ENCODE measurements at regions of chr3 and their contacts with region 1.

Region 1: GRCh38 chr3:55897573-55898224 is 410.6 kb upstream of the WNT5A start:
- DNase-seq: peak; percentile 21
- ATAC-seq: peak; percentile 52; the same call in 1 of the 2 replicates
- H3K4me3 ChIP-seq: no peak overlapping the region
- H3K27ac ChIP-seq: no peak overlapping the region
- H3K4me1 ChIP-seq: peaks cover 6% of the 10 kb centered on the region
- H3K27me3 ChIP-seq: peaks cover 11% of the 10 kb centered on the region
- CTCF ChIP-seq: peak; percentile 58
- POLR2A ChIP-seq: no peak
- RAD21 ChIP-seq: peak; percentile 74

Region 2: GRCh38 chr3:54427941-54428871 is 1469.5 kb before region 1 on chr3:
- CTCF ChIA-PET with region 1: interaction called, 3 read pairs
- POLR2A ChIA-PET with region 1: no interaction called
- dilution Hi-C with region 1: no loop called
- in situ Hi-C with region 1: no loop called
- intact Hi-C with region 1: loop called (anchors 5 kb)
- DNase-seq: peak; percentile 76
- ATAC-seq: peak; percentile 90
- H3K4me3 ChIP-seq: no peak overlapping the region
- H3K27ac ChIP-seq: no peak overlapping the region
- H3K4me1 ChIP-seq: no peaks in the 10 kb centered on the region
- H3K27me3 ChIP-seq: no peaks in the 10 kb centered on the region
- CTCF ChIP-seq: peak; percentile 88
- POLR2A ChIP-seq: no peak
- RAD21 ChIP-seq: peak; percentile 83

Region 3: GRCh38 chr3:54859184-54859583 is 1038.5 kb before region 1 on chr3:
- CTCF ChIA-PET with region 1: interaction called, 3 read pairs
- POLR2A ChIA-PET with region 1: no interaction called
- dilution Hi-C with region 1: no loop called
- in situ Hi-C with region 1: no loop called
- intact Hi-C with region 1: loop called (anchors 5 kb)
- DNase-seq: peak; percentile 68
- ATAC-seq: peak; percentile 50; the same call in 1 of the 2 replicates
- H3K4me3 ChIP-seq: no peak overlapping the region
- H3K27ac ChIP-seq: no peak overlapping the region
- H3K4me1 ChIP-seq: peaks cover 6% of the 10 kb centered on the region
- H3K27me3 ChIP-seq: no peaks in the 10 kb centered on the region; the same call in 1 of the 2 replicates
- CTCF ChIP-seq: no peak
- POLR2A ChIP-seq: no peak
- RAD21 ChIP-seq: no peak

Region 4: GRCh38 chr3:54951405-54951804 is 946.3 kb before region 1 on chr3:
- CTCF ChIA-PET with region 1: no interaction called
- POLR2A ChIA-PET with region 1: no interaction called
- dilution Hi-C with region 1: no loop called
- in situ Hi-C with region 1: no loop called
- intact Hi-C with region 1: loop called (anchors 5 kb)
- DNase-seq: peak; percentile 93
- ATAC-seq: peak; percentile 89
- H3K4me3 ChIP-seq: no peak overlapping the region
- H3K27ac ChIP-seq: peak overlapping the region; percentile 29
- H3K4me1 ChIP-seq: peaks cover 18% of the 10 kb centered on the region
- H3K27me3 ChIP-seq: no peaks in the 10 kb centered on the region
- CTCF ChIP-seq: peak; percentile 92
- POLR2A ChIP-seq: peak; percentile 53; the same call in 1 of the 2 replicates
- RAD21 ChIP-seq: peak; percentile 99

Region 5: GRCh38 chr3:55620351-55621025 is 277.2 kb before region 1 on chr3:
- CTCF ChIA-PET with region 1: no interaction called
- POLR2A ChIA-PET with region 1: no interaction called
- dilution Hi-C with region 1: no loop called
- in situ Hi-C with region 1: no loop called
- intact Hi-C with region 1: loop called (anchors 10 kb)
- DNase-seq: peak; percentile 87
- ATAC-seq: peak; percentile 49
- H3K4me3 ChIP-seq: no peak overlapping the region
- H3K27ac ChIP-seq: peak overlapping the region; percentile 80
- H3K4me1 ChIP-seq: peaks cover 15% of the 10 kb centered on the region
- H3K27me3 ChIP-seq: no peaks in the 10 kb centered on the region
- CTCF ChIP-seq: no peak
- POLR2A ChIP-seq: no peak
- RAD21 ChIP-seq: no peak

Region 6: GRCh38 chr3:56042326-56042951 is 144.7 kb after region 1 on chr3:
- CTCF ChIA-PET with region 1: no interaction called
- POLR2A ChIA-PET with region 1: no interaction called
- dilution Hi-C with region 1: no loop called
- in situ Hi-C with region 1: no loop called
- intact Hi-C with region 1: loop called (anchors 5 kb)
- DNase-seq: peak; percentile 61
- ATAC-seq: peak; percentile 97
- H3K4me3 ChIP-seq: no peak overlapping the region
- H3K27ac ChIP-seq: no peak overlapping the region
- H3K4me1 ChIP-seq: no peaks in the 10 kb centered on the region
- H3K27me3 ChIP-seq: peaks cover 6% of the 10 kb centered on the region
- CTCF ChIP-seq: peak; percentile 58
- POLR2A ChIP-seq: no peak
- RAD21 ChIP-seq: peak; percentile 66

Measured in IMR-90 (cell line).